PC-3 (cell line): ENCODE measurements at regions of chr7 and their contacts with region 1.

Region 1: GRCh38 chr7:158885624-158886023 is 29.3 kb downstream of the DYNC2I1 start:
- DNase-seq: peak; percentile 28
- ATAC-seq: peak; percentile 37; the same call in 1 of the 2 replicates
- H3K4me3 ChIP-seq: no peak overlapping the region
- H3K27ac ChIP-seq: no peak overlapping the region
- H3K4me1 ChIP-seq: no peaks in the 10 kb centered on the region
- H3K27me3 ChIP-seq: no peaks in the 10 kb centered on the region
- CTCF ChIP-seq: peak; percentile 58

Region 2: DNA sequence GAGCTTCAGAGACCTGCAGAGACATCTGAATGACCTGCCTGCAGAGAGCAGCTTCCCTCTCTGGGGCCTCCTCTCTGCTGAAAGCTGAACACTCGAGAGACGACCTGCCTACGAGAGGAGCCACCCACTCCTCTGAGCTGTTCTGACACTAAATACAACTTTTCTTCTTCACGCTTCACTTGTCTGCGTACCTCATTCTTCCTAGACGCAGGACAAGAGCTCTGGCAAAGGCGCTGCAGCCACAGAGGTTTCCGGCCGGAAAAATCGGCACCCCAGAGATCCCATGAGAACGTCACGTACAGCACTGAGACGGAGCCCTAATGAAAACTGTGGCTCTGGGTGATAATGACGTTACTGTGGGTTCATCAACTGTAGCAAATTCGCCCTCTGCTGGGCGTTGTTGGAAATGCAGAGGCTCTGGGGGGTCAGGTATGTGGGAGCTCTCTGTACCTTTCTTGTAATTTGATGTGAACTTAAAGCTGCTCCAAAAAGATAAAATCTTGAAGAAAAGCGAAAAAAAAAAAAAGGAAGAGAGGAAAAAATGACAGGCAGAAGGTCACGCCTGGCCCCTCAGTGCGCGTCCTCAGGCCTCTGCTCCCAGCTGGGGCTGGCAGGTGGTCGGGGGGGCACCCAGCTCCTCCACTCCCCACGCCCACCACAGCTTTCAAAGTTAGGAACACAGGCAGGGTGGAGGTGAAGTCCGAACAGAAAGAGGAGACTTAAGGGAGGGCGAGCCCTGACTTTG is 91.4 kb after region 1 on chr7:
- CTCF ChIA-PET with region 1: no interaction called
- POLR2A ChIA-PET with region 1: no interaction called
- intact Hi-C with region 1: loop called (anchors 1 kb)
- DNase-seq: peak; percentile 82
- ATAC-seq: peak; percentile 54
- H3K4me3 ChIP-seq: peak overlapping the region; percentile 62
- H3K27ac ChIP-seq: no peak overlapping the region
- H3K4me1 ChIP-seq: no peaks in the 10 kb centered on the region; the same call in 1 of the 2 replicates
- H3K27me3 ChIP-seq: no peaks in the 10 kb centered on the region
- CTCF ChIP-seq: peak; percentile 88